ENCODE measurements at regions of chr6 and their contacts with region 1.

Region 1: GRCh38 chr6:160455541-160456213 is 107.5 kb downstream of the SLC22A3 start:
- DNase-seq: peak; percentile 47
- ATAC-seq: peak; percentile 97
- H3K4me3 ChIP-seq: no peak overlapping the region; the same call in 1 of the 2 replicates
- H3K27ac ChIP-seq: peak overlapping the region; percentile 15; the same call in 1 of the 2 replicates
- H3K4me1 ChIP-seq: no peaks in the 10 kb centered on the region
- H3K27me3 ChIP-seq: no peaks in the 10 kb centered on the region
- CTCF ChIP-seq: peak; percentile 93
- POLR2A ChIP-seq: peak; percentile 55; the same call in 1 of the 2 replicates
- RAD21 ChIP-seq: peak; percentile 94

Region 2: DNA sequence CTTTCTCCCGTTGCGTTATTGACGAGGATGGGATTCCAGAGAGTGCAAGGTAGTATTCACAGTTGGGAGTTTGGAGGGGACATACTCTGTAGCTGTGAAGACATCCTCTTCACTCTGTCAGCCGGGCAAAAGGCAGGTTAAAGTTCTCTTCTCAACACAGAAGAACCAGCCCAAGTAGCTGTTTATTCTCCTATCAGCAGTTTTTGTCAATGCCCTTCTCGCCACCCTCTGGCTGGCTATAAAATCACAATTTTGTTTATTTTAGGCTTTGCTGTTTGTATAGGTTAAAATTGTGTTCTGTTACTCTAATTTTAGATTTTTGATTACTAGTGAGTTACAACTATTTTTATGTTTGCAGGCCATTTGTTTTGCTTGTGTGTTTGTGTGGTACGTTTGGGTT is 602.8 kb before region 1 on chr6:
- CTCF ChIA-PET with region 1: no interaction called
- POLR2A ChIA-PET with region 1: no interaction called
- dilution Hi-C with region 1: no loop called
- in situ Hi-C with region 1: loop called (anchors 25 kb)
- intact Hi-C with region 1: no loop called
- DNase-seq: no peak
- ATAC-seq: 0 out of 2 replicates have a peak, but pooled peaks have one; percentile 24
- H3K4me3 ChIP-seq: no peak overlapping the region
- H3K27ac ChIP-seq: no peak overlapping the region
- H3K4me1 ChIP-seq: no peaks in the 10 kb centered on the region
- H3K27me3 ChIP-seq: peaks cover 5% of the 10 kb centered on the region
- CTCF ChIP-seq: peak; percentile 17; the same call in 1 of the 2 replicates
- POLR2A ChIP-seq: no peak
- RAD21 ChIP-seq: no peak

Region 3: GRCh38 chr6:160421854-160422253 is 33.8 kb before region 1 on chr6:
- CTCF ChIA-PET with region 1: no interaction called
- POLR2A ChIA-PET with region 1: no interaction called
- dilution Hi-C with region 1: no loop called
- in situ Hi-C with region 1: no loop called
- intact Hi-C with region 1: no loop called
- DNase-seq: no peak
- ATAC-seq: no peak
- H3K4me3 ChIP-seq: no peak overlapping the region
- H3K27ac ChIP-seq: no peak overlapping the region
- H3K4me1 ChIP-seq: no peaks in the 10 kb centered on the region
- H3K27me3 ChIP-seq: no peaks in the 10 kb centered on the region
- CTCF ChIP-seq: no peak
- POLR2A ChIP-seq: no peak
- RAD21 ChIP-seq: no peak

Region 4: DNA sequence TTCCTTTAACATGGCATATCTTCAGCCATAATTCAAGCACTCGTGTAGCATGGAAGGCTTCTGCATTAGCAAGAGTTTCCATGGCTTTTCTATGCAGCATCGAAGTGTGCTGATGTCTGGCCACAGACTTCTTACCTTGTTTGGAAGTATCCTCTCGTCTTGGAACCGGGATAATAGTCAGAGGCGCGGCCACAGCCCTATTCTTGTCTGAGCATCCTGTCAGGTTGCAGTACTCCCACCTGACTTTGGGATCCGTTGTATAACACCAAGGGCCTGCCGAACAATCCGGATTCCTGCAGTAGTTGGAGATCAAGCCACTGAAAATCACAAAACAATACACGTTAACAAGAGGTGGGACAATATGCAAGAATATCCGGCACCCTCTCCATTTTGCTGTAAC is 31.4 kb after region 1 on chr6:
- CTCF ChIA-PET with region 1: no interaction called
- POLR2A ChIA-PET with region 1: no interaction called
- dilution Hi-C with region 1: no loop called
- in situ Hi-C with region 1: no loop called
- intact Hi-C with region 1: no loop called
- DNase-seq: no peak
- ATAC-seq: no peak
- H3K4me3 ChIP-seq: no peak overlapping the region
- H3K27ac ChIP-seq: no peak overlapping the region
- H3K4me1 ChIP-seq: no peaks in the 10 kb centered on the region
- H3K27me3 ChIP-seq: no peaks in the 10 kb centered on the region
- CTCF ChIP-seq: no peak
- POLR2A ChIP-seq: no peak
- RAD21 ChIP-seq: no peak